GM18951 (cell line): ENCODE measurements at regions of chr2 and their contacts with region 1.

Region 1: GRCh38 chr2:190382851-190383250 is 25.3 kb upstream of the MFSD6 start:
- POLR2A ChIP-seq: no peak

Region 2: DNA sequence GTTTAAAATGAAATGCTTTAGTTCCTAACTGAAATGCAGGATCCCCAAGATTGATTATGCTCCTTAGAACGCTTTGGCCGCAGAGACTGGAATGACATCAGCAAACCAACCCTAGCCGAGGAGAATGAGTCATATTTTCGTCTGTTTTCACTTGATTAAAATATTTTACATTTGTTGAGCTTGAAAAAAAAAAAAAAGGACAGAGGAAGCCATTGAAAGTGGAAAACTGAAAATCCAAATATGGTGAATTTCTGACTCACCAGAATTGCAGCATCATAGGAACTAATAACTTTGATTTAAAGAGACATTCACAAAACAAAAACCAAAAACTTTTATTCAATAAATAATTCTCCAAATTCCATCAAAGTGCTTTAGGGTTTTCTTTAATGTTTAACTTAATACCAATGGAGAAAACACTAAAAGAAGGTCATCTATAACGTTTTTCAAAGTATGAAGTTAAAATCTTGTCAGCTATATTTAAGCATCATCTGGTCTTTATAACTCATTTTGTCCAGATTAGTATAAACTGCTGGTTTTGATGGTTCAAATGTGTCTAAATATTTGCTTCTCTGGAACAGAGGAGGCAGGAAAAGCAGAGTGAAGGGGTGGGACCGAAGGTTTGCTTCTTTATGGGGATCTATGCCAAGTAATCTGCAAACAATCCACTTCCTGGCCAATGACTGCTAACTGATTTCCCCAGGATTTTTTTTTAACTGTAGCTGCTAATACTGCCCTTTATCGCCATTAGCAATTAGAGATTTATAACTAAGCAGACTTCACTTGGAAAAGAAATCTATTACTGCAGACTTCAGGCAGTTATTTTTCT is 1172.4 kb before region 1 on chr2:
- in situ Hi-C with region 1: no loop called
- POLR2A ChIP-seq: no peak

Region 3: DNA sequence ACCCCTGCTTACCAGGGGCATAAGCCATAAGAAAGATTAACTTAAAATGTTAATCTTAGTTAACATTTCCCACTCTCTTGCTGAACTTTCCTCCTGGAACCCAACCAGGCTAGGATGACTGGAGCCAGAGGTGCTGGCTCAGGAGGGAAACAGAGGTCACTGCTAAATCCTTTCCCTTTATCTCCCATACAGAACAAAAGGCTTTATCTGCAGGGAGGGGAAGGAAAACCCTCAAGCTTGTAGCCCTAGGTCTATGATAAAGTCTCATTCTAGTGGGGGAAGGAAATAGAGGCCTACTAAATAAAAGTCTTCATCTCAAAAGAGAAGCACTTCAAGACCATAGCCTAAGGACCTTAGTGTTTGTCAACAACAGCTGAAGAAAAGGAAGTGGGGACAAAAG is 81.8 kb before region 1 on chr2:
- in situ Hi-C with region 1: no loop called
- POLR2A ChIP-seq: no peak

Region 4: DNA sequence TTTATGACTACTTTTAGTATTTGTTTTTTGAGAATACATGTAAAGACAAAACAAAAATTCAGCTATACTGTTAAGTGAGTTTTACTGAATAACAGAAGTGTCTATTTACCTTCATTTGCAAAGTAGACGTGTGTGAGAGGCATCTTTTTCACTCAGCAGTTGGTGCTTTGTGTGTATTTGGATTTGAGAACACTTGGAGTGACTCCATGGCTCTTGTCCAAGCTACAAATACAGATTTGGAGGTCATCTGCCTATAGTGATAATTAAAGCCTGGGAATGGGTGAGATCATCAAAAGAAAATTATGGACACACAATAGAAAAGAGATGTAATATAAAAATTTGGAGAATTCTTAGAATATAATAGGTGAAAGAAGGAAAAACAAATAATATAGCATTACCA is 272.3 kb after region 1 on chr2:
- in situ Hi-C with region 1: no loop called
- POLR2A ChIP-seq: no peak

Region 5: GRCh38 chr2:190679813-190680591 is 297.2 kb after region 1 on chr2:
- in situ Hi-C with region 1: loop called (anchors 10 kb)
- POLR2A ChIP-seq: peak; percentile 37

Region 6: GRCh38 chr2:190804182-190804795 is 421.4 kb after region 1 on chr2:
- in situ Hi-C with region 1: loop called (anchors 10 kb)
- POLR2A ChIP-seq: no peak